GM12878 (cell line): ENCODE measurements at regions of chr1 and their contacts with region 1.

Region 1: GRCh38 chr1:151494741-151495281 is 16.4 kb upstream of the CGN start:
- DNase-seq: no peak
- ATAC-seq: peak; percentile 80
- H3K4me3 ChIP-seq: no peak overlapping the region
- H3K27ac ChIP-seq: no peak overlapping the region
- H3K4me1 ChIP-seq: peaks cover 4% of the 10 kb centered on the region
- H3K27me3 ChIP-seq: no peaks in the 10 kb centered on the region
- CTCF ChIP-seq: no peak
- EP300 ChIP-seq: peak; percentile 27 to 56; a peak in 2 of 4 replicates
- POLR2A ChIP-seq: no peak
- RAD21 ChIP-seq: no peak

Region 2: DNA sequence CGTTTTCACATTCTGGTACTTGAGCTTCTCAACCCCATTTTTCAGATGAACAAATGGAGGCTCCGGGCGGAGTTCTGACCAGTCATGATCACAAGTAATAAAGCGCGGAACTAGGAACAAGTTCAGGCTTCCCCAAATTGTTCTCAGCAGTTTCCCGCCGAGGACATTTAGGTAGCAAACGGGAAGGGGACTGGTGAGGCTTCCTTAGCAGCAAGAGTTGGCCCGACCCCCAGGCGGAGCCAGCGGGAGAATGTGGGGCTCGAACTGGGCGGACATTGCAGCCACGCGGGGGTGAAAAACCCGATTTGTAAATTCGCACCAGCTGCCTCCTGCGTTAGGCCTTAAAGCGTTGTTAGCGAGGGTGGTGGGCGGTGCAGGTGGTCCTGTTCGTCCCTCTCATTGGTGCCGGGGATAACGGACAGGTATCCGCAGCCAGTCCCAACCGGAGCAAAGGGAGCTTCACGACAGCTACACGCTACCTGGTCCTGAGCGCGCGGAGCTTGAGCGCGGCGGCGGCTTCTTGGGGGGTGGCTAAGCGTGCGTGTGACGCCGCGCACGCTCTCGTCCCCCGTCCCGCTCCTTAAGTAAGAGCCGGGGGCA is 363.7 kb before region 1 on chr1:
- CTCF ChIA-PET with region 1: no interaction called
- POLR2A ChIA-PET with region 1: no interaction called
- RAD21 ChIA-PET with region 1: no interaction called
- SMC1A ChIA-PET with region 1: no interaction called
- in situ Hi-C with region 1: no loop called
- intact Hi-C with region 1: no loop called
- DNase-seq: peak; percentile 39
- ATAC-seq: peak; percentile 98
- H3K4me3 ChIP-seq: peak overlapping the region; percentile 31; the same call in 1 of the 2 replicates
- H3K27ac ChIP-seq: 0 out of 2 replicates have a peak overlapping the region, but pooled peaks have one; percentile 15
- H3K4me1 ChIP-seq: peaks cover 8% of the 10 kb centered on the region; the same call in 1 of the 2 replicates
- H3K27me3 ChIP-seq: no peaks in the 10 kb centered on the region
- CTCF ChIP-seq: no peak
- EP300 ChIP-seq: no peak
- POLR2A ChIP-seq: peak; percentile 35
- RAD21 ChIP-seq: no peak

Region 3: GRCh38 chr1:151465026-151465425 is 29.8 kb before region 1 on chr1:
- CTCF ChIA-PET with region 1: no interaction called
- POLR2A ChIA-PET with region 1: interaction called, 10 read pairs
- RAD21 ChIA-PET with region 1: no interaction called
- SMC1A ChIA-PET with region 1: interaction called, 5 read pairs
- in situ Hi-C with region 1: no loop called
- intact Hi-C with region 1: no loop called
- DNase-seq: no peak
- ATAC-seq: no peak
- H3K4me3 ChIP-seq: no peak overlapping the region
- H3K27ac ChIP-seq: no peak overlapping the region
- H3K4me1 ChIP-seq: peaks cover 1% of the 10 kb centered on the region
- H3K27me3 ChIP-seq: no peaks in the 10 kb centered on the region
- CTCF ChIP-seq: no peak
- EP300 ChIP-seq: no peak
- POLR2A ChIP-seq: no peak
- RAD21 ChIP-seq: no peak

Region 4: GRCh38 chr1:151574545-151575529 is 80.0 kb after region 1 on chr1:
- CTCF ChIA-PET with region 1: no interaction called
- POLR2A ChIA-PET with region 1: no interaction called
- RAD21 ChIA-PET with region 1: no interaction called
- SMC1A ChIA-PET with region 1: no interaction called
- in situ Hi-C with region 1: no loop called
- intact Hi-C with region 1: no loop called
- DNase-seq: no peak
- ATAC-seq: peak; percentile 71
- H3K4me3 ChIP-seq: no peak overlapping the region
- H3K27ac ChIP-seq: no peak overlapping the region
- H3K4me1 ChIP-seq: peaks cover 4% of the 10 kb centered on the region; the same call in 1 of the 2 replicates
- H3K27me3 ChIP-seq: no peaks in the 10 kb centered on the region; a peak in 2 of 4 replicates
- CTCF ChIP-seq: no peak
- EP300 ChIP-seq: no peak
- POLR2A ChIP-seq: no peak
- RAD21 ChIP-seq: no peak